ENCODE measurements at regions of chr20 and their contacts with region 1.

Region 1: DNA sequence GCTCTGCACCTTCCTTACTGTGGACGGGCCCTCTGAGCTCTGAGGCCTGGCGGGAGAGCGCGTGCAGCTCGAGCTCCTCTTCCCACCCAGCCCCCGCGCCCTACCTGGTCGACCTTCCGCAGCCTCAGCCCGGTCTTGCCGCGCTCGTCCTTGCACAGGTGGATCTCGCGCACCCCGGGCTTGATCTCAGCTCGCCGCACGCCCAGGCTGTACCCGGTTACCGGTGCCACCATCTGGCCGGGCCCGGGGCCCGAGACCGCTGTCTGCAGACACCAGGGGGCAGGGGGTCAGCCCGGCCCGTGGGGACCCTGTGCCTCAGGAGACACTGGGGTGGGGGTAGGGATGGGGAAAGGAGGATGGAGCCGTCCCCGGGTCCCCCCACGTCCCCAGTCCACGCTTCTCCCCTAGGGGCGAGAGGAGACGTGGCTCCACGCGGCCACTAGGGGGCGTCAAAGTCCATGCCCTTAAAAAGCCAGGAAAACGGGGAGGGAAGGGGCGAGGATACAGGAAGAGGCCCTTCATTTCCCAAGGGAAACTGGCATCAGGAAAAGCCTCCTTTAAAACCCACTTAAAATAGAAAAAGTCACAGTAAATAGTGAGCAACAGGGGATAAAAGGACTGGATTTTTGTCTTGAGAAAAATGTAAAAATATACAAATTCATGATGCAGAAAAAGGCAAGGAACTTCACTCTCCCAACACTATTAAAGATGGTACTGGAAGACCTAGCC is 15.5 kb downstream of the SDCBP2 start:
- DNase-seq: peak; percentile 75
- H3K4me3 ChIP-seq: peak overlapping the region; percentile 43
- H3K27ac ChIP-seq: peak overlapping the region; percentile 64
- H3K4me1 ChIP-seq: peaks cover 12% of the 10 kb centered on the region
- H3K27me3 ChIP-seq: no peaks in the 10 kb centered on the region
- CTCF ChIP-seq: peak; percentile 99

Region 2: GRCh38 chr20:1392823-1393506 is 79.6 kb after region 1 on chr20 and contains the start of gene FKBP1A:
- intact Hi-C with region 1: loop called (anchors 5 kb)
- DNase-seq: peak; percentile 91
- H3K4me3 ChIP-seq: peak within 1 kb of the TSS; percentile 96
- H3K27ac ChIP-seq: peak within 1 kb of the TSS; percentile 93
- H3K4me1 ChIP-seq: peaks cover 68% of the 10 kb centered on the region
- H3K27me3 ChIP-seq: peaks cover 20% of the 10 kb centered on the region
- CTCF ChIP-seq: peak; percentile 51
- total RNA-seq, gene FKBP1A: 124 TPM

Region 3: GRCh38 chr20:1437235-1437904 is 124.0 kb after region 1 on chr20:
- intact Hi-C with region 1: loop called (anchors 5 kb)
- DNase-seq: peak; percentile 65
- H3K4me3 ChIP-seq: no peak overlapping the region
- H3K27ac ChIP-seq: no peak overlapping the region
- H3K4me1 ChIP-seq: no peaks in the 10 kb centered on the region
- H3K27me3 ChIP-seq: no peaks in the 10 kb centered on the region
- CTCF ChIP-seq: peak; percentile 88